ENCODE measurements at regions of chr2 and their contacts with region 1.

Region 1: DNA sequence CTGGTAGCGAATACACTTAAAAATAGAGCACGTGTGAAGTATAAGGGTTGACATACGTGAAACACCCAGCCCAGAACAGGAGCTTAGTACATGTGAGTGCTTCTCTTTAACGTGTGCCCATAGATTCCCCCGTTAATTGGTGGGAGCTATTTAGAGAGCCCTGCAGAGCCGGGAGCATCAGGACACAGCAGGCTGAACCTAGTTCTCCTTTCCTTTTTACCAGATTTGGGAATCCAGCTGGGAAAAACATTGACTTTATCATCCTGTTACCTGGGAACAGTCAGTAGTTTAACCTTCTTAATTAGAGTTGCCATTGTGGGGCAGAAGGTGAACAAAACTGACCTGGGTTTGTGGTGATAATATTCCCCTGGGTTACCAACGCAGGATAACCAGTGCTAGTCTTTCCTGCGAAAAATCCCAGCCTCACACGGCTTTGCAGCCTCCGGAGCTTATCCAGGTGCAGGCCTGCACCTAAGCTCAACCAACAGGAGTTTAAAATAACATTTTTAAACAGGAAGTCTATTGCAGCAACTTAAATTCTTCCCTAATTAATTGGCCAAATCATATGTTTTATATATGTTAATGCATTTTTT is 78.1 kb upstream of the SPTBN1 start:
- DNase-seq: no peak
- ATAC-seq: no peak
- H3K4me3 ChIP-seq: no peak overlapping the region
- H3K4me3 Mint-ChIP-seq: no peak overlapping the region
- H3K27ac ChIP-seq: no peak overlapping the region
- H3K27ac Mint-ChIP-seq: no peak overlapping the region
- H3K4me1 ChIP-seq: no peaks in the 10 kb centered on the region
- H3K4me1 Mint-ChIP-seq: no peaks in the 10 kb centered on the region
- H3K27me3 ChIP-seq: peaks cover 0 to 5% of the 10 kb centered on the region in 2 experiments
- H3K27me3 Mint-ChIP-seq: peaks cover 11 to 17% of the 10 kb centered on the region in 2 donors

Region 2: DNA sequence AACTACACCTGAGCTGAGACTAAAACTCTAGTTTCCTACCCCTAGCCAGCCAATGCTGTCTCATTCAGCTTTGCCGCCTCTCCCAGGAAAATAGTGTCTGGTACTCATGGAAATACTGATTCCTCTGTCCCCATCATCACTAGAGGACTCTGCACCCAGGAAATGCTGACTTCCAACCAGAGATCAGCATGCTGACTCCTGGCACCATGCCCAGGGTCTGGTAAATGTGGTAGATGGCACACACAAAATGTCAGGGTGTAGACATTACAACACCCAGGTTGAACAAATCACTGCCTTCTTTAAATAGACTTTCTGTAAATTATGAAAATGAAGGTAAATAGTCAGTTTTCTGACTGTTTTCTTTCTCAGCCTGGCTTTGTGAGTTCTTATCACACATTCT is 917.6 kb before region 1 on chr2:
- CTCF ChIA-PET with region 1: interaction called in 1 of 2 experiments, 12 read pairs
- POLR2A ChIA-PET with region 1: no interaction called
- DNase-seq: no peak
- ATAC-seq: no peak
- H3K4me3 ChIP-seq: no peak overlapping the region
- H3K4me3 Mint-ChIP-seq: no peak overlapping the region
- H3K27ac ChIP-seq: no peak overlapping the region
- H3K27ac Mint-ChIP-seq: no peak overlapping the region
- H3K4me1 ChIP-seq: no peaks in the 10 kb centered on the region
- H3K4me1 Mint-ChIP-seq: no peaks in the 10 kb centered on the region
- H3K27me3 ChIP-seq: no peaks in the 10 kb centered on the region
- H3K27me3 Mint-ChIP-seq: peaks cover 0 to 4% of the 10 kb centered on the region in 2 donors